Activated naive CD4-positive, alpha-beta T cell treated with anti-CD3 and anti-CD28 coated beads for 36 hours (primary cell): ENCODE measurements at regions of chr1 and their contacts with region 1.

Region 1: DNA sequence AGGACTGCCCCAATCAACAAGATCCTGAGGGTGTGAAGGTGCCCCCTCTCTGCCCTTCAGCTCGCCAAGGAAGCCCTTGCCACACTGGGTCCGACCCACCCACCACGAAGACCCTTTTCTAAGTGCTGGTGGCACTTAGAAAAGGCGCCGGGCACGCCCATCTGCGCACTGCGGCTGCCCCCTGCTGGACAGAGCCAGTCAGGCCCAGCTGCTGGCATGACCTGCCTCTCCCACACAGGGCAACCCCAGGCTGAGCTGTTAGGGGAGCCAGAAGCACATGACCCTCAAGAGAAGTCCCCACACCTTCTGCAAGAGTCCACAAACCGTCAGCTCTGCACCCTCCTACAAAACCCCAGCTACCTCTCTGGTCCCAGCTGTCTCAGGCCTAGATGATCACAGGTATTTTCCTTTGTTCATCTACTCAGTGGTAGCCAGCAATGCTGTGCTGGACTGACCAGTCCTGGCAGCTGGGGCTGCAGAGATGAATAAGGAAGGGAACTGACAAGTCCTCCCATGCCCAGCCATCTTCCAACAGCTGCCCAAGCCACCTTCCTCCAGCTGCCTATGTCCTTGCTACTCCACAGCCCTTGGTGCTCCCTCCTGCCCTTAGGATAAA is 40.0 kb upstream of the ZC3H12A start:
- DNase-seq: peak; percentile 81
- H3K4me3 Mint-ChIP-seq: no peak overlapping the region
- H3K27ac Mint-ChIP-seq: no peak overlapping the region
- H3K4me1 Mint-ChIP-seq: no peaks in the 10 kb centered on the region
- H3K27me3 Mint-ChIP-seq: peaks cover 8% of the 10 kb centered on the region

Region 2: DNA sequence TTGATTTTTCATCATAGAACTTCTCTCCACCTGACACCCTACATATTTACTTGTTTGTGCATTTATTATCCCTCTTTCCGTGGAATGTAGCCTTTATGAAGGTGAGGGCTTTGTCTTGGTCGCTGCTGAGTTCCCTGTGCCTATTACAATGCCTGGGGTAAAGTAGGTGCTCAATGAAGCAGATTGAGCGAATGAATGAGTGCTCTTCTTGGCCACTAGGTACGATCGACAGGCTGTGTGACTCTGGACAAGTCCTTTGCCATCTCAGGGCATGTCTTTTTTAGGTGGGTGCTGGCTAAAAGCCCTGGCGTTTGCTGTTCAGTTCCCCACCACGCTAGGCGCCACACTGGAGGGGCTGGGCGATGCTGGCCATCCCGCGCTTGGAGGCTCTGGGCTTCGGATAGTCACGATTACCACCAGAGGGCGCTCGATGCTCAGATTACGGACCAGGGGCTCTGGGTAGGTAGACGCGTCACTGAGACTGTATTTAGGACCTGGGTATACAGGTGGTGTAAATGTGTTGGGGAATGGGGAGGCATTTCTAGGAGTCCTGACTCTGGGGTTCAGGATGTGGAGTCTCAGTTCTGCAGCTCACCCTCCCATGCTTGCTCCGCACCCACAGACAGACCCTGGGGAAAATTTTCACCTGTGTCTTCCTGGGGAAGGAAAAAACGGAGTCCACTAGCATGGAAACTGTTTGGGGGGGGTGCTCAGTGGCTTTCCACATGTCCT is 880.6 kb before region 1 on chr1:
- CTCF ChIA-PET with region 1: interaction called, 4 read pairs
- intact Hi-C with region 1: loop called (anchors 10 kb)
- DNase-seq: peak; percentile 86
- H3K4me3 Mint-ChIP-seq: no peak overlapping the region
- H3K27ac Mint-ChIP-seq: no peak overlapping the region
- H3K4me1 Mint-ChIP-seq: no peaks in the 10 kb centered on the region
- H3K27me3 Mint-ChIP-seq: peaks cover 35% of the 10 kb centered on the region

Region 3: GRCh38 chr1:36703526-36704208 is 730.7 kb before region 1 on chr1:
- CTCF ChIA-PET with region 1: interaction called, 4 read pairs
- intact Hi-C with region 1: loop called (anchors 1 kb)
- DNase-seq: peak; percentile 83
- H3K4me3 Mint-ChIP-seq: no peak overlapping the region
- H3K27ac Mint-ChIP-seq: no peak overlapping the region
- H3K4me1 Mint-ChIP-seq: peaks cover 2% of the 10 kb centered on the region
- H3K27me3 Mint-ChIP-seq: peaks cover 9% of the 10 kb centered on the region

Region 4: DNA sequence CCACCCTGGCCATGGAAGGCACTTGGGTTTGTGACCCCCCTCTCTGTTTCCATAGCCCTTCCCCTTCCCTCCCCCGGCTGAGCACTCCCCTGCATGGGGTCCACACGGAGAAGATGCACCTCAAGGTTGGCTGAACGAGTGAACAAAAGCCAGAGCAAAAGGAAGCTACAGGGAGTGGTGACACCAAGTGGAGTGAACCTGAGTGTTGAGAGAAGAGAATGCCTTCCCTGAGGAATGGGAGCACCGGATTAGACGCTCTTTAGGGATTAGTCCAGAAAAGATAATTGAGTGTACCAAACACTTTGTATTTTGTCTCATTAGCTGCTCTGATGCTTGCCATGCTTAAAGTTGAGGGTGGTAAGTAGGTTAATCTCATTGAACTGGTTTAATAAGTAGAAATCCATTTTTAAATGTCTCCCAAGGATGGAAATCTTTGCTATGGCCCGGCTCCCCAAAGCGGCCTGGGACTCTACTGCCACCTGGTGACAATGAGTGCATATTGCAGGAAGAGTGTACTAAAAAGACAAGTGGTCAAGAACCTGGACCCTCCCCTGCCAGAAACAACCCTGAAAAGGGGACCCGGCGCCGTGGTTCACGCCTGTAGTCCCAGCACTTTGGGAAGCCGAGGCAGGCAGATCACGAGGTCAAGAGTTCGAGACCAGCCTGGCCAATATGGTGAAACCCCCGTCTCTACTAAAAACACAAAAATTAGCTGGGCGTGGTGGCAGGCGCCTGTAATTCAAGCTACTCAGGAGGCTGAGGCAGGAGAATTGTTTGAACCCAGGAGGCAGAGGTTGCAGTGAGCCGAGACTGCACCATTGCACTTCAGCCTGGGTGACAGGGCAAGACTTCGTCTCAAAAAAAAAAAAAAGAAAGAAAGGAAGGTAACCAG is 110.7 kb before region 1 on chr1:
- CTCF ChIA-PET with region 1: interaction called, 5 read pairs
- intact Hi-C with region 1: loop called (anchors 5 kb)
- DNase-seq: peak; percentile 54
- H3K4me3 Mint-ChIP-seq: no peak overlapping the region
- H3K27ac Mint-ChIP-seq: no peak overlapping the region
- H3K4me1 Mint-ChIP-seq: peaks cover under 1% of the 10 kb centered on the region
- H3K27me3 Mint-ChIP-seq: peaks cover 23% of the 10 kb centered on the region